ENCODE measurements at regions of chr2 and their contacts with region 1.

Region 1: GRCh38 chr2:235384624-235385023 is 109.2 kb upstream of the AGAP1 start:
- DNase-seq: peak; percentile 35 to 91 (median 86)
- H3K4me3 ChIP-seq: peak overlapping the region in 32 of 59 donors; percentile 2 to 48 (median 22)
- H3K27ac ChIP-seq: peak overlapping the region in 58 of 59 donors; percentile 5 to 92 (median 84)
- H3K27me3 ChIP-seq: peaks cover 0 to 8% (median 0%) of the 10 kb centered on the region in 45 donors
- CTCF ChIP-seq: peak in 17 of 56 donors; percentile 10 to 49 (median 20)

Region 2: DNA sequence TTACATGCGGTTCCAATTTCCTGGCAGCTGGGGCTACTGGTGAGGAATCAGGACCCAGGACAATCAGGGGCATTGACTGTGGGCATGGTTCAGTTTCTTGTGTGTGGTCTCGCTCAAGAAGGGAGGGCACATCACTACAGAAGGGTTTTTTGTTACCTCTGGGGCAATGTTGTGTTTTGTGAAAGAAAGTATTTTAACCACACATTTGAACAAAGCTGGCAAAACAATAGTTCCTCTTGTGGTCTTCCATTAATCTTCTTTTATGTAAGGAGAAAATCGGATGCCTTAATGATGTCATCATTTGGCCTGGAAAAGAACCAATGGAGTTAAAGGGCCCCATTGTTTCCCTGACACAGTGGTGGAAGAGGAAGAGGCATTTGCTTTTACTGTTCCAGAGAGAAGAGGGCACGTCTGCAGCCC is 235.4 kb before region 1 on chr2:
- intact Hi-C with region 1: loop called (anchors 10 kb)
- DNase-seq: peak in 8 of 10 donors; percentile 36 to 78 (median 66)
- H3K4me3 ChIP-seq: peak overlapping the region in 6 of 59 donors; percentile 2 to 43 (median 14)
- H3K27ac ChIP-seq: peak overlapping the region in 55 of 59 donors; percentile 2 to 92 (median 81)
- H3K27me3 ChIP-seq: peaks cover 0 to 7% (median 0%) of the 10 kb centered on the region in 45 donors
- CTCF ChIP-seq: peak in 3 of 56 donors; percentile 11 to 13 (median 13)

Region 3: GRCh38 chr2:235263205-235264122 is 121.2 kb before region 1 on chr2:
- intact Hi-C with region 1: loop called in 1 of 2 experiments (anchors 10 kb)
- DNase-seq: peak; percentile 53 to 94 (median 84)
- H3K4me3 ChIP-seq: peak overlapping the region in 56 of 59 donors; percentile 2 to 62 (median 40)
- H3K27ac ChIP-seq: peak overlapping the region in 56 of 59 donors; percentile 3 to 92 (median 76)
- H3K27me3 ChIP-seq: no peaks in the 10 kb centered on the region
- CTCF ChIP-seq: peak in 15 of 56 donors; percentile 4 to 34 (median 14)

Region 4: DNA sequence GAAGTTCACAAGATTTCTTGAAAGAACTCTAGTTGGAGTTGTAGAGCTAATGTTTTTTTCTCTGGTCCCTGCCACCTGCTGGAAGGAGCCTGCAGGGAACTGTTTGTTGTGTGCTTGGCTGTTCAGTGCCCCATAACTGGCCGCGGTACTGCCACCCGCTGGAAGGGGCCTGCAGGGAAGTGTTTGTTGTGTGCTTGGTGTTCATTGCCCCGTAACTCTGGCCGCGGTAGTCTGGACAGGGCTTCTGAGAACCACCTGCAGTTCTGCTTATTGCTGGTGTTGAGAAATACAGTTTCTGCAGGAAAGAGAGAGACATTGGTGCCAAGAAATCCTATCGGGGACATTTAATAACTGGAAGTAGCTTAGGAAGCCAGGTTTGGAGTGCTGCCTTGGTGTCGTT is 167.3 kb after region 1 on chr2:
- intact Hi-C with region 1: loop called in 1 of 2 experiments (anchors 10 kb)
- DNase-seq: peak; percentile 50 to 79 (median 70)
- H3K4me3 ChIP-seq: peak overlapping the region in 9 of 59 donors; percentile 1 to 38 (median 18)
- H3K27ac ChIP-seq: peak overlapping the region in 16 of 59 donors; percentile 5 to 73 (median 44)
- H3K27me3 ChIP-seq: no peaks in the 10 kb centered on the region
- CTCF ChIP-seq: peak; percentile 13 to 87 (median 65)

Region 5: GRCh38 chr2:235746257-235747084 is 361.8 kb after region 1 on chr2:
- intact Hi-C with region 1: loop called in 1 of 2 experiments (anchors 5 kb)
- DNase-seq: peak in 5 of 10 donors; percentile 62 to 84 (median 76)
- H3K4me3 ChIP-seq: no peak overlapping the region
- H3K27ac ChIP-seq: peak overlapping the region in 25 of 59 donors; percentile 2 to 72 (median 48)
- H3K27me3 ChIP-seq: no peaks in the 10 kb centered on the region
- CTCF ChIP-seq: peak; percentile 47 to 93 (median 85)

Measured in dorsolateral prefrontal cortex (tissue), 120 donors.